ENCODE measurements at regions of chr9 and their contacts with region 1.

Region 1: GRCh38 chr9:116549061-116549664 is 137.9 kb upstream of the TRIM32 start:
- DNase-seq: peak; percentile 80 to 94
- H3K4me3 ChIP-seq: no peak overlapping the region
- H3K27ac ChIP-seq: peak overlapping the region; percentile 59
- H3K4me1 ChIP-seq: peaks cover 50% of the 10 kb centered on the region
- H3K27me3 ChIP-seq: no peaks in the 10 kb centered on the region
- CTCF ChIP-seq: no peak

Region 2: DNA sequence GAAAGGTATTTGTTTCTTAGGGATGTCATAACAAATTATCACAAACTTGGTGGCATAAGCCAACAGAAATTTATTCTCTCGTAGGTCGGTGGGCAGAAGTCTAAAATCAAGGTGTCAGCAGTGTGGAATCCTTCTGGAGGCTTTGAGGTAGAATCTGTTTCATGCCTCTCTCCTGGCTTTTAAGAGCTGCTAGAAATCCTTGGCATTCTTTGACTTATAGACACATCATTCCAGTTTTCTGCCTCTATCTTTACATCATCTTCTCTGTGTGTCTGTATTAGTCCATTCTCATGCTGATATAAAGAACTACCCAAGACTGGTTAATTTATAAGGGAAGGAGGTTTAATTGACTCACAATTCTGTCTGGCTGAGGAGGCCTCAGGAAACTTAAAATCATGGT is 883.6 kb before region 1 on chr9:
- CTCF ChIA-PET with region 1: no interaction called
- POLR2A ChIA-PET with region 1: no interaction called
- intact Hi-C with region 1: no loop called
- DNase-seq: no peak
- H3K4me3 ChIP-seq: no peak overlapping the region
- H3K27ac ChIP-seq: no peak overlapping the region
- H3K4me1 ChIP-seq: peaks cover 7% of the 10 kb centered on the region; the same call in 1 of the 2 replicates
- H3K27me3 ChIP-seq: no peaks in the 10 kb centered on the region
- CTCF ChIP-seq: no peak

Region 3: DNA sequence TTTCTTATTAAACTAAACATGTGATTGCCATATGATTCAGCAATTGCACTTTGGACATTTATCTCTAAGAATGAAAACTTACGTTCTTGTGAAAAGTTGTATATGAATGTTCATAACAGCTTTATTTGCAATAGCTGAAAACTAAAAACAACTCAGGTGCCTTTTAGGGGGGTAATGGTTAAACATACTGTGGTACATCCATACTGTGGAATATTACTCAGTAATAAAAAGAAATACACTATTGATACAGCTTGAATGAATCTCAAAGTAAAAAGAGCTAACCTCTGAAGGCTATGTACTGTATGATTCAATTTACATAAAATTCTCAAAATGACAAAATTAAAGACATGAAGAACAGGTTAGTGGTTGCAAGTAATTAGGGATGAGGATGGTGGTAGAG is 735.1 kb before region 1 on chr9:
- CTCF ChIA-PET with region 1: interaction called, 15 read pairs
- POLR2A ChIA-PET with region 1: no interaction called
- intact Hi-C with region 1: no loop called
- DNase-seq: no peak
- H3K4me3 ChIP-seq: no peak overlapping the region
- H3K27ac ChIP-seq: no peak overlapping the region
- H3K4me1 ChIP-seq: no peaks in the 10 kb centered on the region; the same call in 1 of the 2 replicates
- H3K27me3 ChIP-seq: no peaks in the 10 kb centered on the region
- CTCF ChIP-seq: no peak

Region 4: GRCh38 chr9:116420993-116421538 is 128.1 kb before region 1 on chr9:
- CTCF ChIA-PET with region 1: no interaction called
- POLR2A ChIA-PET with region 1: no interaction called
- intact Hi-C with region 1: loop called (anchors 10 kb)
- DNase-seq: no peak
- H3K4me3 ChIP-seq: no peak overlapping the region
- H3K27ac ChIP-seq: no peak overlapping the region
- H3K4me1 ChIP-seq: no peaks in the 10 kb centered on the region
- H3K27me3 ChIP-seq: no peaks in the 10 kb centered on the region
- CTCF ChIP-seq: no peak

Region 5: GRCh38 chr9:116572095-116572748 is 23.1 kb after region 1 on chr9:
- CTCF ChIA-PET with region 1: no interaction called
- POLR2A ChIA-PET with region 1: no interaction called
- intact Hi-C with region 1: no loop called
- DNase-seq: peak; percentile 57 to 75
- H3K4me3 ChIP-seq: no peak overlapping the region
- H3K27ac ChIP-seq: no peak overlapping the region
- H3K4me1 ChIP-seq: peaks cover 15% of the 10 kb centered on the region; the same call in 1 of the 2 replicates
- H3K27me3 ChIP-seq: no peaks in the 10 kb centered on the region
- CTCF ChIP-seq: peak; percentile 94